A673 (cell line): ENCODE measurements at regions of chr18 and their contacts with region 1.

Region 1: GRCh38 chr18:28781616-28782362 is 604.9 kb upstream of the CDH2 start:
- DNase-seq: peak; percentile 96
- H3K4me3 ChIP-seq: no peak overlapping the region
- H3K27ac ChIP-seq: peak overlapping the region; percentile 52
- H3K4me1 ChIP-seq: peaks cover 40% of the 10 kb centered on the region
- H3K27me3 ChIP-seq: no peaks in the 10 kb centered on the region
- CTCF ChIP-seq: no peak

Region 2: GRCh38 chr18:28767727-28768211 is 14.0 kb before region 1 on chr18:
- CTCF ChIA-PET with region 1: no interaction called
- POLR2A ChIA-PET with region 1: interaction called, 12 read pairs
- intact Hi-C with region 1: no loop called
- DNase-seq: peak; percentile 81
- H3K4me3 ChIP-seq: no peak overlapping the region
- H3K27ac ChIP-seq: peak overlapping the region; percentile 5
- H3K4me1 ChIP-seq: peaks cover 45% of the 10 kb centered on the region
- H3K27me3 ChIP-seq: no peaks in the 10 kb centered on the region
- CTCF ChIP-seq: no peak